ENCODE measurements at regions of chr7 and their contacts with region 1.

Region 1: DNA sequence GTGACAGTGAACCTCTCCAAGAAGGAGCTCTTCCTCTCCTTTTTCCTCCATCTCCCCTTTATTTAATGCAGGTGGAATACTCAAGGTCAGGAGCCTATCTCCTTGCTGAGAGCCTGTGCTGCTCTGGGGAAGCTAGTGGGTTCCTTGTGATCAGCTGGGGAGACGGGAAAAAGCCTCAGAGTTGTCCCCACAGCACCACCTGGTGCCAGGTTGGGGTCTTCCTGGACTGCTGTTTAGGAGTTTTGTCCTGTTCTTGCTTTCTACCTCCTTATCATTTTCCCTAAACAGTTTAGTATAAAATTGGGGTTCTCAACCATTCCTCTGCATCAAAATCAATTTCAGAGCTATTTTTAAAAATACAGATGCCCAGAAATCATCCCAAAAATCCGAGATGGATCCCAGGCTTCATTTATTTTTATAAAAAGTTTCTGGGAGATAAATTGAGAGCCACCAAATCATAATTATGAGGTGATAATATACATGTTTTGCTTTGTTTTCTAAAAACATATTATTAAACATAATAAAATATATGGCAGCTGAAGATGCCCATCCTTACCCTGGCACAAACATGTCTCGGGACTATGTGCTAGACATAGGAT is 44.3 kb downstream of the MACC1 start:
- DNase-seq: peak in 2 of 9 donors; percentile 2 to 5
- ATAC-seq: no peak
- H3K4me3 ChIP-seq: no peak overlapping the region
- H3K4me3 Mint-ChIP-seq: no peak overlapping the region
- H3K27ac ChIP-seq: no peak overlapping the region
- H3K27ac Mint-ChIP-seq: no peak overlapping the region
- H3K4me1 ChIP-seq: no peaks in the 10 kb centered on the region
- H3K4me1 Mint-ChIP-seq: no peaks in the 10 kb centered on the region
- H3K27me3 ChIP-seq: no peaks in the 10 kb centered on the region
- H3K27me3 Mint-ChIP-seq: no peaks in the 10 kb centered on the region

Region 2: GRCh38 chr7:19708397-19709248 is 464.2 kb before region 1 on chr7 and contains the start of gene POLR1F:
- CTCF ChIA-PET with region 1: no interaction called
- POLR2A ChIA-PET with region 1: no interaction called
- intact Hi-C with region 1: loop called in 1 of 2 experiments (anchors 1 kb)
- DNase-seq: peak; percentile 84 to 97 (median 95)
- ATAC-seq: peak; percentile 98
- H3K4me3 ChIP-seq: peak within 1 kb of the TSS; percentile 70
- H3K4me3 Mint-ChIP-seq: peak within 1 kb of the TSS; percentile 95 to 99 (median 97)
- H3K27ac ChIP-seq: peak within 1 kb of the TSS; percentile 77
- H3K27ac Mint-ChIP-seq: peak within 1 kb of the TSS; percentile 89 to 98 (median 95)
- H3K4me1 ChIP-seq: peaks cover 19 to 23% of the 10 kb centered on the region in 2 donors
- H3K4me1 Mint-ChIP-seq: peaks cover 31 to 66% (median 57%) of the 10 kb centered on the region in 7 donors
- H3K27me3 ChIP-seq: no peaks in the 10 kb centered on the region
- H3K27me3 Mint-ChIP-seq: peaks cover 0 to 5% (median 0%) of the 10 kb centered on the region in 5 donors
- total RNA-seq, gene POLR1F: 11.8 to 27.3 (median 19.0) TPM

Region 3: GRCh38 chr7:19713676-19714075 is 459.2 kb before region 1 on chr7:
- CTCF ChIA-PET with region 1: no interaction called
- POLR2A ChIA-PET with region 1: no interaction called
- intact Hi-C with region 1: loop called in 1 of 2 experiments (anchors 1 kb)
- DNase-seq: peak in 7 of 9 donors; percentile 15 to 59 (median 52)
- ATAC-seq: no peak
- H3K4me3 ChIP-seq: no peak overlapping the region
- H3K4me3 Mint-ChIP-seq: no peak overlapping the region
- H3K27ac ChIP-seq: no peak overlapping the region
- H3K27ac Mint-ChIP-seq: peak overlapping the region in 1 of 9 donors; percentile 65
- H3K4me1 ChIP-seq: peaks cover 7% of the 10 kb centered on the region in 2 donors
- H3K4me1 Mint-ChIP-seq: peaks cover 7 to 25% (median 15%) of the 10 kb centered on the region in 7 donors
- H3K27me3 ChIP-seq: no peaks in the 10 kb centered on the region
- H3K27me3 Mint-ChIP-seq: peaks cover 0 to 21% (median 0%) of the 10 kb centered on the region in 5 donors

Region 4: GRCh38 chr7:19754521-19755116 is 418.2 kb before region 1 on chr7:
- CTCF ChIA-PET with region 1: no interaction called
- POLR2A ChIA-PET with region 1: no interaction called
- intact Hi-C with region 1: loop called in 1 of 2 experiments (anchors 2 kb)
- DNase-seq: peak in 4 of 9 donors; percentile 1 to 26 (median 12)
- ATAC-seq: no peak
- H3K4me3 ChIP-seq: no peak overlapping the region
- H3K4me3 Mint-ChIP-seq: no peak overlapping the region
- H3K27ac ChIP-seq: no peak overlapping the region
- H3K27ac Mint-ChIP-seq: no peak overlapping the region
- H3K4me1 ChIP-seq: no peaks in the 10 kb centered on the region
- H3K4me1 Mint-ChIP-seq: no peaks in the 10 kb centered on the region
- H3K27me3 ChIP-seq: no peaks in the 10 kb centered on the region
- H3K27me3 Mint-ChIP-seq: peaks cover 0 to 13% (median 4%) of the 10 kb centered on the region in 5 donors

Region 5: DNA sequence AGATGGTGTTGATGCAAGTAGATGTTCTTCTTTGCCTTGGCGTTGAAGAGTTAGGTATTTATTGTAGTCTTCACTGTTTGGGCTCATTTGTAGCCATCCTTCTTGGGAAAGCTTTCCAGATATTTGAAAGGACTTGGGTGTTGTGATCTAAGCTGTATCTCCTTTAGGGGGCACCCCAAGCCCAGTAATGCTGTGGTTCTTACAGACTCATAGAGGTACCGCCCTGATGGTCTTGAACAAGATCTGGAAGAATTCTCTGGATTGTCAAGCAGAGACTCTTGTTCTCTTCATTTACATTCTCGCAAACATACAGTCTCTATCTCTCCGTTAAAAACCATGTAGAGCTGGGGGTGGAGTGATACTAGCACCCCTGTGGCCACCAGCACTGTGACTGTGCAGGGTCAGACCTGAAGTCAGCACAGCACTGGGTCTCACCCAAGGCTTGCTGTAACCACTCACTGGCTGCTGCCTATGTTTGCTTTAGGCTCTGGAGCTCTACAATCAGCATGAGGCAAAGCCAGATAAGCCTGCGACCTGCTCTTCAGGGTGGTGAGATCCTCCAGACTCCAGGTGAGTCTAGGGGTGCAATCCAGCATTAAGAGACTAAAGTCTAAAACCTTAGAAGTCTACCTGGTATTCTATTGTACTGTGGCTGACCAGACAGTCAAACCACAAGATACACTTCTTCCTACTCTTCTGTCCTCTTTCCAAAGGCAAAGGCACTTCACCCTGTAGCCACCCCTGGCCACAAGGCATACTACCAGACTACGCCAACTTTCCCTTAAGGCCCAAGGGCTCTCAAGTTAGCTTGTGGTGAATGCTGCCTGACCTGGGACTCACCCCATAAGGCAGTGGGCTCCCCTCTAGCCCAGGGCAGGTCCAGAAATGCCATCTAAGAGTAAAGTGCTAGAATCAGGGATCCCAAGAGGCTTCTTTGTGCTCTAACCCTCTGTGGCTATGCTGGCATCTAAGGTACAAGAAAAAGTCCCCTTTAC is 189.7 kb before region 1 on chr7:
- CTCF ChIA-PET with region 1: no interaction called
- POLR2A ChIA-PET with region 1: no interaction called
- intact Hi-C with region 1: loop called in 1 of 2 experiments (anchors 2 kb)
- DNase-seq: no peak
- ATAC-seq: no peak
- H3K4me3 ChIP-seq: no peak overlapping the region
- H3K4me3 Mint-ChIP-seq: no peak overlapping the region
- H3K27ac ChIP-seq: no peak overlapping the region
- H3K27ac Mint-ChIP-seq: no peak overlapping the region
- H3K4me1 ChIP-seq: no peaks in the 10 kb centered on the region
- H3K4me1 Mint-ChIP-seq: no peaks in the 10 kb centered on the region
- H3K27me3 ChIP-seq: no peaks in the 10 kb centered on the region
- H3K27me3 Mint-ChIP-seq: no peaks in the 10 kb centered on the region

Region 6: DNA sequence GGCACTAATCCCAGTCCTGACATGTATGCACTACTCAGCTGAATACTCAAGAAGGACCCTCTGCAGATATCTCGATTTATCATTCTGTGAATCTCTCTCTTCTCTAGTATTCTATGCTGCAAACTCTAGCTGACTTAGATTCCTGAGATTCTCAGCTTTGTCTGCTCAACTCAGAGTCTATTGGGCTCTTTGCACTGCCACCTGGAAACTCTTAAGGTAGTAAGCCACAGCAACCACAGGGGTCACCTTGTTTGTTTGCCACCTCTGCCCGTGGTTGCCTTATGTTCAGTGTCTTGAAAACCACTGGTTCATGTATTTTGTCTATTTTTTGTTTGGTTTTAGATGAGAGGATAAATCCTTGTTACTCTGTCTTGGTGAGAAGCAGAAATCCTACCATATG is 541.0 kb after region 1 on chr7:
- CTCF ChIA-PET with region 1: no interaction called
- POLR2A ChIA-PET with region 1: no interaction called
- intact Hi-C with region 1: no loop called
- DNase-seq: no peak
- ATAC-seq: no peak
- H3K4me3 ChIP-seq: no peak overlapping the region
- H3K4me3 Mint-ChIP-seq: no peak overlapping the region
- H3K27ac ChIP-seq: no peak overlapping the region
- H3K27ac Mint-ChIP-seq: no peak overlapping the region
- H3K4me1 ChIP-seq: no peaks in the 10 kb centered on the region
- H3K4me1 Mint-ChIP-seq: no peaks in the 10 kb centered on the region
- H3K27me3 ChIP-seq: no peaks in the 10 kb centered on the region
- H3K27me3 Mint-ChIP-seq: peaks cover 0 to 5% (median 0%) of the 10 kb centered on the region in 5 donors

Measured in naive thymus-derived CD4-positive, alpha-beta T cell (primary cell).